Calu3 (cell line): ENCODE measurements at regions of chr5 and their contacts with region 1.

Region 1: GRCh38 chr5:127934791-127935256 is 148.7 kb upstream of the SLC12A2 start:
- DNase-seq: peak; percentile 87
- H3K4me3 Mint-ChIP-seq: peak overlapping the region; percentile 9
- H3K27ac Mint-ChIP-seq: peak overlapping the region; percentile 97
- H3K4me1 Mint-ChIP-seq: peaks cover 84% of the 10 kb centered on the region
- H3K27me3 Mint-ChIP-seq: no peaks in the 10 kb centered on the region
- CTCF ChIP-seq: peak; percentile 47

Region 2: GRCh38 chr5:127885176-127885575 is 49.6 kb before region 1 on chr5:
- CTCF ChIA-PET with region 1: interaction called, 6 read pairs
- intact Hi-C with region 1: loop called (anchors 2 kb)
- DNase-seq: no peak
- H3K4me3 Mint-ChIP-seq: peak overlapping the region; percentile 46
- H3K27ac Mint-ChIP-seq: peak overlapping the region; percentile 90
- H3K4me1 Mint-ChIP-seq: peaks cover 71% of the 10 kb centered on the region
- H3K27me3 Mint-ChIP-seq: no peaks in the 10 kb centered on the region
- CTCF ChIP-seq: no peak

Region 3: DNA sequence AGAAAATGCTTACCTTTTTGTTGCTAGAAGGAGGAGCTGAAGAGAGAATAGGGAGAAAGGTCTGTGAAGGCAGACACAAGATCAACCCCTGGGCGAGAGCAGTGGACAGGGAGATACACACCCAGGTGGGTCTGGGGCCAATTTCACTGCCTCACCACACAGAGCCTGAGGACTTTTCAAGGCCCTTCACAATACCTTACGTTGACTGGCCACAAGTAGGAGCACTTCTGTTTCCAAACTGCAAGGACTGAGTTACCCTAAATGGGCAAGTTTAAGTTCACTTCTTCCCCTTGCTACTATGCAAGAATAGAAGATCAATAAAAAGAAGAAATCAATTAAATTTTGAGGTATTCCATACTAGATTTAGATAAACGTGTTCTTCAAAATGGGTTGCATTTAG is 25.7 kb before region 1 on chr5:
- CTCF ChIA-PET with region 1: interaction called, 16 read pairs
- intact Hi-C with region 1: loop called (anchors 1 kb)
- DNase-seq: peak; percentile 71
- H3K4me3 Mint-ChIP-seq: no peak overlapping the region
- H3K27ac Mint-ChIP-seq: peak overlapping the region; percentile 83
- H3K4me1 Mint-ChIP-seq: peaks cover 61% of the 10 kb centered on the region
- H3K27me3 Mint-ChIP-seq: no peaks in the 10 kb centered on the region
- CTCF ChIP-seq: peak; percentile 72